CD4-positive, alpha-beta T cell (primary cell): ENCODE measurements at regions of chr15 and their contacts with region 1.

Region 1: GRCh38 chr15:42736793-42737528 is at the start of gene CDAN1:
- DNase-seq: peak; percentile 84 to 97 (median 92)
- ATAC-seq: peak; percentile 91
- H3K4me3 ChIP-seq: peak within 1 kb of the TSS; percentile 65
- H3K4me3 Mint-ChIP-seq: peak within 1 kb of the TSS; percentile 93
- H3K27ac ChIP-seq: peak within 1 kb of the TSS; percentile 64 to 69
- H3K27ac Mint-ChIP-seq: peak within 1 kb of the TSS; percentile 88
- H3K4me1 ChIP-seq: peaks cover 25% of the 10 kb centered on the region
- H3K4me1 Mint-ChIP-seq: peaks cover 18% of the 10 kb centered on the region
- H3K27me3 ChIP-seq: no peaks in the 10 kb centered on the region
- H3K27me3 Mint-ChIP-seq: no peaks in the 10 kb centered on the region
- CTCF ChIP-seq: no peak
- total RNA-seq, gene CDAN1: 23.2 to 24.7 TPM

Region 2: GRCh38 chr15:42920519-42921227 is 183.7 kb after region 1 on chr15 and contains the start of gene TTBK2:
- CTCF ChIA-PET with region 1: interaction called, 3 read pairs
- POLR2A ChIA-PET with region 1: interaction called, 3 read pairs
- intact Hi-C with region 1: loop called (anchors 2 to 10 kb)
- DNase-seq: peak; percentile 94 to 99 (median 98)
- ATAC-seq: peak; percentile 96
- H3K4me3 ChIP-seq: peak within 1 kb of the TSS; percentile 75
- H3K4me3 Mint-ChIP-seq: peak within 1 kb of the TSS; percentile 99
- H3K27ac ChIP-seq: peak within 1 kb of the TSS; percentile 59 to 63
- H3K27ac Mint-ChIP-seq: peak within 1 kb of the TSS; percentile 89
- H3K4me1 ChIP-seq: peaks cover 15% of the 10 kb centered on the region
- H3K4me1 Mint-ChIP-seq: peaks cover 35% of the 10 kb centered on the region
- H3K27me3 ChIP-seq: no peaks in the 10 kb centered on the region
- H3K27me3 Mint-ChIP-seq: no peaks in the 10 kb centered on the region
- CTCF ChIP-seq: peak; percentile 26
- total RNA-seq, gene TTBK2: 17.5 to 20.1 TPM